ENCODE measurements at regions of chr19 and their contacts with region 1.

Region 1: GRCh38 chr19:48872182-48872883 is at the start of gene PPP1R15A:
- DNase-seq: peak; percentile 99 to 100
- ATAC-seq: peak; percentile 41 to 65 (median 63)
- H3K4me3 ChIP-seq: peak within 1 kb of the TSS; percentile 86
- H3K4me3 Mint-ChIP-seq: peak within 1 kb of the TSS; percentile 100
- H3K27ac ChIP-seq: peak within 1 kb of the TSS; percentile 99
- H3K27ac Mint-ChIP-seq: peak within 1 kb of the TSS; percentile 98 to 100
- H3K4me1 ChIP-seq: peaks cover 45% of the 10 kb centered on the region
- H3K4me1 Mint-ChIP-seq: peaks cover 43 to 46% of the 10 kb centered on the region in 2 donors
- H3K27me3 ChIP-seq: no peaks in the 10 kb centered on the region
- H3K27me3 Mint-ChIP-seq: peaks cover 0 to 16% of the 10 kb centered on the region in 2 donors
- CTCF ChIP-seq: no peak
- total RNA-seq, gene PPP1R15A: 942 to 1,308 (median 1,174) TPM

Region 2: GRCh38 chr19:48899781-48900476 is 27.6 kb after region 1 on chr19 and contains the start of gene NUCB1:
- intact Hi-C with region 1: loop called (anchors 1 kb)
- DNase-seq: peak; percentile 97 to 99
- ATAC-seq: peak; percentile 97 to 100 (median 98)
- H3K4me3 ChIP-seq: peak within 1 kb of the TSS; percentile 88
- H3K4me3 Mint-ChIP-seq: peak within 1 kb of the TSS; percentile 98
- H3K27ac ChIP-seq: peak within 1 kb of the TSS; percentile 82
- H3K27ac Mint-ChIP-seq: peak within 1 kb of the TSS; percentile 92 to 97
- H3K4me1 ChIP-seq: peaks cover 43% of the 10 kb centered on the region
- H3K4me1 Mint-ChIP-seq: peaks cover 26 to 36% of the 10 kb centered on the region in 2 donors
- H3K27me3 ChIP-seq: peaks cover 13% of the 10 kb centered on the region
- H3K27me3 Mint-ChIP-seq: peaks cover 2 to 17% of the 10 kb centered on the region in 2 donors
- CTCF ChIP-seq: no peak
- total RNA-seq, gene NUCB1: 163 to 192 (median 171) TPM